GM12878 (cell line): ENCODE measurements at regions of chr7 and their contacts with region 1.

Region 1: DNA sequence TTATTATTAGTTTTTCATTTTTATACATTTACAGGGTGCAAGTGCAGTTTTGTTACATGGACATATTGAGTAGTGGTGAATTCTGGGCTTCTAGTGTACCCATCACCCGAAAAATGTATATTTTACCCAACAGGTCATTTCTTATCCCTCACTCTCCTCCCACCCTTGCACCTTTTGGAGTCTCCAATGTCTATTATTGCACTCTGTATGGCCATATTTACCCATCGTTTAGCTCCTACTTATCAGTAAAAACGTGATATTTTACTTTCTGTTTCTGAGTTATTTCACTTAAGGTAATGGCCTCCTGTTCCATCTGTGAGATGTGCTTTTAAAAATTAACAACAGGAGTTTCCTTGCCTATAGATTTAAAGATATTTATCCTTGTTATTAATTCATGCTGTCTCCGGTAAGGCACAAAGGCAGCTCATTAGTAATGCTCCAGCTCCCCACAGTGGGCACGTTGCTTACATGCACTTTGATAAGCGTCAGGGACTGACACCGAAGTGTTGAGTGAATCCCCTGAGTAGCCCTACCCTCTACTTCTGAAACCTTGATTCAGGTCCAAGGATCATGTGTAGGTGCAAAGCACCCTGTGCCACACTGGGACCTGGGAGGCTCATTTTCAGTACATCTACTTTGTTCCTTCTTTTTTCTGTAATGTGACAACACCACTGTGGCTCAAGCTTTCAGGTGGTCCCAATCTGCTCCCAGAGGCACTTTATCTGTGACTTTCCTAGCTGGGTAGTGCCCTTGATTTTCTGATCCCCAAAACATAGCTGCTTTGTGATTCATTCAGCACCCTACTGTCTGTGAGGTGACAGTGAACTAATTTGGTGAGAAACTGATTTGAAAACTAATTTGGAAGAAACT is 27.3 kb downstream of the HYAL4 start:
- DNase-seq: no peak
- ATAC-seq: peak; percentile 98
- H3K4me3 ChIP-seq: no peak overlapping the region
- H3K27ac ChIP-seq: no peak overlapping the region
- H3K4me1 ChIP-seq: no peaks in the 10 kb centered on the region
- H3K27me3 ChIP-seq: no peaks in the 10 kb centered on the region
- CTCF ChIP-seq: peak; percentile 61 to 86 (median 63)
- EP300 ChIP-seq: no peak
- POLR2A ChIP-seq: no peak
- RAD21 ChIP-seq: peak; percentile 88

Region 2: GRCh38 chr7:123580406-123581161 is 291.6 kb before region 1 on chr7:
- CTCF ChIA-PET with region 1: interaction called, 14 read pairs
- POLR2A ChIA-PET with region 1: no interaction called
- RAD21 ChIA-PET with region 1: interaction called, 7 read pairs
- SMC1A ChIA-PET with region 1: interaction called, 6 read pairs
- in situ Hi-C with region 1: no loop called
- intact Hi-C with region 1: no loop called
- DNase-seq: no peak
- ATAC-seq: peak; percentile 89
- H3K4me3 ChIP-seq: no peak overlapping the region
- H3K27ac ChIP-seq: no peak overlapping the region
- H3K4me1 ChIP-seq: no peaks in the 10 kb centered on the region
- H3K27me3 ChIP-seq: no peaks in the 10 kb centered on the region; a peak in 2 of 4 replicates
- CTCF ChIP-seq: peak; percentile 58 to 63 (median 59)
- EP300 ChIP-seq: no peak
- POLR2A ChIP-seq: no peak
- RAD21 ChIP-seq: peak; percentile 51

Region 3: GRCh38 chr7:123682690-123683089 is 189.5 kb before region 1 on chr7:
- CTCF ChIA-PET with region 1: interaction called, 26 read pairs
- POLR2A ChIA-PET with region 1: no interaction called
- RAD21 ChIA-PET with region 1: interaction called, 25 read pairs
- SMC1A ChIA-PET with region 1: interaction called, 22 read pairs
- in situ Hi-C with region 1: loop called (anchors 5 kb)
- intact Hi-C with region 1: loop called (anchors 1 kb)
- DNase-seq: no peak
- ATAC-seq: peak; percentile 81
- H3K4me3 ChIP-seq: no peak overlapping the region
- H3K27ac ChIP-seq: no peak overlapping the region
- H3K4me1 ChIP-seq: no peaks in the 10 kb centered on the region
- H3K27me3 ChIP-seq: no peaks in the 10 kb centered on the region
- CTCF ChIP-seq: peak; percentile 35 to 61 (median 46); a peak in 5 of 6 replicates
- EP300 ChIP-seq: no peak
- POLR2A ChIP-seq: no peak
- RAD21 ChIP-seq: peak; percentile 74

Region 4: DNA sequence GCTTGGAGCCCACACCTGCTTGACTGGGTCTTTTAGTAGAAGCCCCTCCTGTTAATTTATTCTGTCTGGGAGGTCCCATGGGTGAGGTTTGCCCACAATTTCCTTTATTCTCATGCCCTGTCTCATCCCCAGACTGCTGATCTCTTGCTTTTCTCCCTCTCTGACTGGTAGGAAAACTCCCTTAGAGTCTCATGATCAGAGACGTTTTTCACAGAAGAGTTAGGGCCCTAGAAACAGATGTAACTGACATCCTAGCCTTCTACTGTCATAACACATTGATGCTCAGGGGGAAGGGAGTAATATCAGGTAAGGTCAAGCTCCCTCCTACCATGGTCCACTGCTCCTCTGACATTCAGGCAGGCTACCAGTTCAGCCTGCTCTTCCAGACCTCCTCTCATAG is 79.7 kb before region 1 on chr7:
- CTCF ChIA-PET with region 1: interaction called, 208 read pairs
- POLR2A ChIA-PET with region 1: interaction called, 4 read pairs
- RAD21 ChIA-PET with region 1: interaction called, 90 read pairs
- SMC1A ChIA-PET with region 1: interaction called, 93 read pairs
- in situ Hi-C with region 1: no loop called
- intact Hi-C with region 1: no loop called
- DNase-seq: no peak
- ATAC-seq: peak; percentile 75
- H3K4me3 ChIP-seq: no peak overlapping the region
- H3K27ac ChIP-seq: no peak overlapping the region
- H3K4me1 ChIP-seq: no peaks in the 10 kb centered on the region
- H3K27me3 ChIP-seq: no peaks in the 10 kb centered on the region
- CTCF ChIP-seq: no peak
- EP300 ChIP-seq: no peak
- POLR2A ChIP-seq: no peak
- RAD21 ChIP-seq: no peak

Region 5: GRCh38 chr7:123823898-123824753 is 48.1 kb before region 1 on chr7:
- CTCF ChIA-PET with region 1: interaction called, 6 read pairs
- POLR2A ChIA-PET with region 1: no interaction called
- RAD21 ChIA-PET with region 1: interaction called, 5 read pairs
- SMC1A ChIA-PET with region 1: interaction called, 15 read pairs
- in situ Hi-C with region 1: no loop called
- intact Hi-C with region 1: no loop called
- DNase-seq: peak; percentile 42
- ATAC-seq: peak; percentile 97
- H3K4me3 ChIP-seq: no peak overlapping the region
- H3K27ac ChIP-seq: peak overlapping the region; percentile 71
- H3K4me1 ChIP-seq: peaks cover 11% of the 10 kb centered on the region
- H3K27me3 ChIP-seq: no peaks in the 10 kb centered on the region
- CTCF ChIP-seq: no peak
- EP300 ChIP-seq: peak in 1 of 2 experiments; percentile 56; a peak in 2 of 4 replicates
- POLR2A ChIP-seq: no peak
- RAD21 ChIP-seq: no peak

Region 6: GRCh38 chr7:123999703-124000102 is 127.5 kb after region 1 on chr7:
- CTCF ChIA-PET with region 1: no interaction called
- POLR2A ChIA-PET with region 1: no interaction called
- RAD21 ChIA-PET with region 1: no interaction called
- SMC1A ChIA-PET with region 1: no interaction called
- in situ Hi-C with region 1: no loop called
- intact Hi-C with region 1: no loop called
- DNase-seq: no peak
- ATAC-seq: no peak
- H3K4me3 ChIP-seq: no peak overlapping the region
- H3K27ac ChIP-seq: no peak overlapping the region
- H3K4me1 ChIP-seq: no peaks in the 10 kb centered on the region
- H3K27me3 ChIP-seq: no peaks in the 10 kb centered on the region
- CTCF ChIP-seq: no peak
- EP300 ChIP-seq: no peak
- POLR2A ChIP-seq: no peak
- RAD21 ChIP-seq: no peak